ENCODE measurements at regions of chr19 and their contacts with region 1.

Region 1: GRCh38 chr19:41959056-41960053 is at the start of gene RABAC1:
- DNase-seq: peak; percentile 76 to 93 (median 86)
- ATAC-seq: peak; percentile 85
- H3K4me3 ChIP-seq: peak within 1 kb of the TSS; percentile 93
- H3K4me3 Mint-ChIP-seq: peak within 1 kb of the TSS; percentile 91
- H3K27ac ChIP-seq: peak within 1 kb of the TSS; percentile 81 to 87
- H3K27ac Mint-ChIP-seq: peak within 1 kb of the TSS; percentile 78
- H3K4me1 ChIP-seq: peaks cover 24% of the 10 kb centered on the region
- H3K4me1 Mint-ChIP-seq: peaks cover 23% of the 10 kb centered on the region
- H3K27me3 ChIP-seq: no peaks in the 10 kb centered on the region
- H3K27me3 Mint-ChIP-seq: no peaks in the 10 kb centered on the region
- CTCF ChIP-seq: no peak
- total RNA-seq, gene RABAC1: 96.0 to 102 TPM

Region 2: GRCh38 chr19:41795031-41795461 is 164.3 kb before region 1 on chr19:
- CTCF ChIA-PET with region 1: interaction called, 13 read pairs
- POLR2A ChIA-PET with region 1: no interaction called
- intact Hi-C with region 1: loop called in 1 of 2 experiments (anchors 5 kb)
- DNase-seq: peak; percentile 33 to 81 (median 51)
- ATAC-seq: peak; percentile 98
- H3K4me3 ChIP-seq: no peak overlapping the region
- H3K4me3 Mint-ChIP-seq: no peak overlapping the region
- H3K27ac ChIP-seq: no peak overlapping the region
- H3K27ac Mint-ChIP-seq: no peak overlapping the region
- H3K4me1 ChIP-seq: no peaks in the 10 kb centered on the region
- H3K4me1 Mint-ChIP-seq: no peaks in the 10 kb centered on the region
- H3K27me3 ChIP-seq: peaks cover 18 to 19% of the 10 kb centered on the region in 2 experiments
- H3K27me3 Mint-ChIP-seq: peaks cover 34% of the 10 kb centered on the region
- CTCF ChIP-seq: peak; percentile 90

Region 3: DNA sequence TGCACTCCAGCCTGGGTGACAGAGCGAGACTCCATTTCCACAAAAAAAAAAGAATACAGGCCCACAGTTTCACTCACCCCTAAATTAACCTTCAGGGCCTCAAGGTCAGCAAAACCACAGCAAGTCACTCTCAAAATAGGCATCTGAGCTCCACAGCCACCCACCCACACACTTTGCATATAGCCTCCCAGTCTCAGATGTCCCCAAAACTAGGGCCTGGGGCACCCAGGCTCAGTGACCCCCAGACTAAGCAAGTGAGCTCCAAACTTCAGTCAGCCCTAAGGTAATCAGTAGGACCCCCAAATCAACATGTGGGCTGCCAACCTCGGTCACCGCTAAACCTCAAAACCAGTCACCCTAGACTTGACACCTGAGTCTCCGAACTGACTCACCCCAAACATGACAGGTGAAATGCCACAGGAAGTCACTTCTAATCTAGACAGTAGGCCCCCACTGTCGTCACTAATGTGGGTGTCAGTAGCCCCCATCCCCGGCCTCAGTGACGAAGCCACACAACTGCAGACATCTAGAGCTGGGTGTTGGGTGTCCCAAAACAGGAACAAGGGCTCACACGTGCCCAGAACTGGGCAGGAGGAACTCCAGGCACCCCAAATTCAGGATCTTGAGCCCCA is 14.1 kb before region 1 on chr19:
- CTCF ChIA-PET with region 1: interaction called, 3 read pairs
- POLR2A ChIA-PET with region 1: interaction called, 19 read pairs
- intact Hi-C with region 1: loop called in 1 of 2 experiments (anchors 1 kb)
- DNase-seq: peak; percentile 74 to 96 (median 84)
- ATAC-seq: peak; percentile 88
- H3K4me3 ChIP-seq: no peak overlapping the region
- H3K4me3 Mint-ChIP-seq: peak overlapping the region; percentile 76
- H3K27ac ChIP-seq: peak overlapping the region; percentile 60 to 67
- H3K27ac Mint-ChIP-seq: peak overlapping the region; percentile 98
- H3K4me1 ChIP-seq: peaks cover 46% of the 10 kb centered on the region
- H3K4me1 Mint-ChIP-seq: peaks cover 56% of the 10 kb centered on the region
- H3K27me3 ChIP-seq: peaks cover 0 to 3% of the 10 kb centered on the region in 2 experiments
- H3K27me3 Mint-ChIP-seq: no peaks in the 10 kb centered on the region
- CTCF ChIP-seq: no peak

Region 4: DNA sequence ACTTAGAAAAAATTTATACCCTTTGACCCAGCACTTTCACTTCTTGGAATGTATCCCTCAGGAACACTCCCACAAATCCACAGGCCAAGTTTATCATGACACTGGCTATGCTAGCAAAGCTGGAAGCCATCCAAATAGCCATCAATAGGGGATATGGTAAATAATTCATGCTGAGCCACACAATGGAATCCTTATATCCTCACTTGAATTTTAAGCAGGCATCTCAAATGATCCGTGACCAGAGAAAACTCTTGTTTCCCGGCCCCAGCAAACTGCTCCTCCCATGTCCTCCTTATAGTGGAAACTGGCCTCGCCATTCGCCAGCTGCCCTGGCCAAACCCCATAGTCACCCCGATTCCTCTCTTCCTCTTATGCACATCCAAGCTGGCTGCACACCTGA is 73.1 kb after region 1 on chr19:
- CTCF ChIA-PET with region 1: interaction called, 6 read pairs
- POLR2A ChIA-PET with region 1: no interaction called
- intact Hi-C with region 1: loop called in 1 of 2 experiments (anchors 2 kb)
- DNase-seq: no peak
- ATAC-seq: no peak
- H3K4me3 ChIP-seq: no peak overlapping the region
- H3K4me3 Mint-ChIP-seq: no peak overlapping the region
- H3K27ac ChIP-seq: no peak overlapping the region
- H3K27ac Mint-ChIP-seq: no peak overlapping the region
- H3K4me1 ChIP-seq: peaks cover 6% of the 10 kb centered on the region
- H3K4me1 Mint-ChIP-seq: no peaks in the 10 kb centered on the region
- H3K27me3 ChIP-seq: no peaks in the 10 kb centered on the region
- H3K27me3 Mint-ChIP-seq: peaks cover 18% of the 10 kb centered on the region
- CTCF ChIP-seq: no peak

Region 5: GRCh38 chr19:42075616-42076379 is 116.4 kb after region 1 on chr19 and contains the start of gene ZNF574:
- CTCF ChIA-PET with region 1: no interaction called
- POLR2A ChIA-PET with region 1: no interaction called
- intact Hi-C with region 1: loop called in 1 of 2 experiments (anchors 5 kb)
- DNase-seq: peak; percentile 95 to 100 (median 97)
- ATAC-seq: peak; percentile 96
- H3K4me3 ChIP-seq: peak within 1 kb of the TSS; percentile 63
- H3K4me3 Mint-ChIP-seq: peak within 1 kb of the TSS; percentile 97
- H3K27ac ChIP-seq: peak within 1 kb of the TSS; percentile 97 to 98
- H3K27ac Mint-ChIP-seq: peak within 1 kb of the TSS; percentile 99
- H3K4me1 ChIP-seq: peaks cover 29% of the 10 kb centered on the region
- H3K4me1 Mint-ChIP-seq: peaks cover 32% of the 10 kb centered on the region
- H3K27me3 ChIP-seq: no peaks in the 10 kb centered on the region
- H3K27me3 Mint-ChIP-seq: no peaks in the 10 kb centered on the region
- CTCF ChIP-seq: no peak
- total RNA-seq, gene ZNF574: 21.5 to 24.0 TPM

Measured in CD4-positive, alpha-beta T cell (primary cell).